ENCODE measurements at regions of chr4 and their contacts with region 1.

Region 1: GRCh38 chr4:110898290-110898689 is 275.4 kb upstream of the PITX2 start:
- DNase-seq: no peak
- H3K4me3 ChIP-seq: no peak overlapping the region
- H3K27ac ChIP-seq: no peak overlapping the region
- H3K4me1 ChIP-seq: no peaks in the 10 kb centered on the region
- H3K27me3 ChIP-seq: no peaks in the 10 kb centered on the region
- CTCF ChIP-seq: no peak
- POLR2A ChIP-seq: no peak

Region 2: DNA sequence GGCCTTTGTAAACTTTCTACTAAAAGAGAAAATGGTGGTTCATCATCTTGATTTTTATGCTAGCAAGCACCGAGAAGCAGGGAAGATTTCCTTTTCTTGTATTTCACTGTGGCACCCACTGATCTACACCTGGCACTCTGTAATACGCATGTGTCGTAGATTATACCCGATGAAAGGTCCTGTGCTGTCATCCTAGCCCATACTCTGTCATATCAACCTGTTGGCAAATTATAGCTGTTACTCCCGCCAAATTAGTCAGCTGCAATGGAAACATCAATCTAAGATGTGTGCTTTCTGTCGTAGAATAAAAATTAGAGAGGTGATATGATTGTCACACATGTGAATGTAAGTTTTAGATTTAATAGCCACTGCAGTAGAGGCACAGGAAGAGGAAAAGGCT is 12.0 kb before region 1 on chr4:
- CTCF ChIA-PET with region 1: no interaction called
- POLR2A ChIA-PET with region 1: interaction called, 12 read pairs
- dilution Hi-C with region 1: no loop called
- intact Hi-C with region 1: no loop called
- DNase-seq: no peak
- H3K4me3 ChIP-seq: no peak overlapping the region
- H3K27ac ChIP-seq: no peak overlapping the region
- H3K4me1 ChIP-seq: no peaks in the 10 kb centered on the region
- H3K27me3 ChIP-seq: no peaks in the 10 kb centered on the region
- CTCF ChIP-seq: no peak
- POLR2A ChIP-seq: no peak

Region 3: GRCh38 chr4:111417521-111417920 is 519.2 kb after region 1 on chr4:
- CTCF ChIA-PET with region 1: no interaction called
- POLR2A ChIA-PET with region 1: no interaction called
- dilution Hi-C with region 1: no loop called
- intact Hi-C with region 1: no loop called
- DNase-seq: no peak
- H3K4me3 ChIP-seq: no peak overlapping the region
- H3K27ac ChIP-seq: no peak overlapping the region
- H3K4me1 ChIP-seq: no peaks in the 10 kb centered on the region
- H3K27me3 ChIP-seq: no peaks in the 10 kb centered on the region
- CTCF ChIP-seq: no peak
- POLR2A ChIP-seq: no peak

Region 4: GRCh38 chr4:111631215-111631999 is 733.1 kb after region 1 on chr4:
- CTCF ChIA-PET with region 1: no interaction called
- POLR2A ChIA-PET with region 1: no interaction called
- dilution Hi-C with region 1: no loop called
- intact Hi-C with region 1: no loop called
- DNase-seq: peak; percentile 27
- H3K4me3 ChIP-seq: no peak overlapping the region
- H3K27ac ChIP-seq: no peak overlapping the region
- H3K4me1 ChIP-seq: no peaks in the 10 kb centered on the region
- H3K27me3 ChIP-seq: peaks cover 0 to 8% of the 10 kb centered on the region in 2 experiments
- CTCF ChIP-seq: peak; percentile 24 to 48
- POLR2A ChIP-seq: no peak